ENCODE measurements at regions of chr3 and their contacts with region 1.

Region 1: GRCh38 chr3:123652346-123652984 is 67.6 kb upstream of the HACD2 start:
- DNase-seq: peak; percentile 89
- H3K4me3 ChIP-seq: no peak overlapping the region
- H3K27ac ChIP-seq: peak overlapping the region; percentile 66 to 81
- H3K4me1 ChIP-seq: peaks cover 16 to 18% of the 10 kb centered on the region in 2 experiments; a peak in 3 of 4 replicates
- H3K27me3 ChIP-seq: no peaks in the 10 kb centered on the region
- CTCF ChIP-seq: peak; percentile 95
- EP300 ChIP-seq: no peak
- RAD21 ChIP-seq: peak; percentile 98

Region 2: DNA sequence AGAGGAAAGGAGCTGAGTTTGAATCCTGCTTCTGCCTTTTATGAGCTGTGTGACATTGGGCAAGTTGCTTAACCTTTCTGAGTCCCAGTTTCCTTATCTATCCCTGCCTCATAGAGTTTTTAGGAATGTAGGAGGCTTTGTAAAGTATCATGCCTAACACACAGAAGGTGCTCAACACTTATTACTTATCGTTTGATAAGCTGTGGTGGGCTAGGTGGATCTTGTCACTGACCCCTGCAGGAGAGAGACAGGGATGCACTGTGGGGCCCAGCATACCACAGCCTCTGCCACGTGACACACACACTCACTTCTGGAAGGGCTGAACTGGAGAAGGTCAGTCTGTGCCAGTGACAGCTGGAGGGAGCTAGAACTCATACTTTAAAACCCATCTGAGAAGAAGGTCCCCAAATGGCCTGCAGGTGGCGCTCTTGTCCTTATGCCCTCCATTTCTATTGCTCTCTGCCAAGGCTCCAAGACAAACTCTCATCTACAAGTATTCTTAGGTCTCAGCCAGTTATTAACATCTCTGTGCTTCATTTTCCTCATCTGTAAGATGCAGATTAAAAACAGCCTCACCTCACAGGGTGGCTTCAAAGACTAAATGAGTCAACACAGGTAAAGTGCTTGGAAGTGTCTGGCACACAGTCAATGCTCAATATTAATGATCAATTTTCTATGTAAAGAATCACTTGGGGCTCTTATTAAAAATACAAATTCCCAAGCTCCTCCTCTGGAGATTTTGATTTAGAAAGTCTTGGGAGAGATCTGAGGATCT is 10.1 kb before region 1 on chr3:
- CTCF ChIA-PET with region 1: interaction called, 53 read pairs
- POLR2A ChIA-PET with region 1: no interaction called
- DNase-seq: peak; percentile 65
- H3K4me3 ChIP-seq: no peak overlapping the region; a peak in 1 of 4 replicates
- H3K27ac ChIP-seq: peak overlapping the region in 1 of 2 experiments; percentile 19; a peak in 2 of 4 replicates
- H3K4me1 ChIP-seq: peaks cover 0 to 7% of the 10 kb centered on the region in 2 experiments; a peak in 1 of 4 replicates
- H3K27me3 ChIP-seq: no peaks in the 10 kb centered on the region
- CTCF ChIP-seq: peak; percentile 97
- EP300 ChIP-seq: no peak
- RAD21 ChIP-seq: peak; percentile 65

Region 3: DNA sequence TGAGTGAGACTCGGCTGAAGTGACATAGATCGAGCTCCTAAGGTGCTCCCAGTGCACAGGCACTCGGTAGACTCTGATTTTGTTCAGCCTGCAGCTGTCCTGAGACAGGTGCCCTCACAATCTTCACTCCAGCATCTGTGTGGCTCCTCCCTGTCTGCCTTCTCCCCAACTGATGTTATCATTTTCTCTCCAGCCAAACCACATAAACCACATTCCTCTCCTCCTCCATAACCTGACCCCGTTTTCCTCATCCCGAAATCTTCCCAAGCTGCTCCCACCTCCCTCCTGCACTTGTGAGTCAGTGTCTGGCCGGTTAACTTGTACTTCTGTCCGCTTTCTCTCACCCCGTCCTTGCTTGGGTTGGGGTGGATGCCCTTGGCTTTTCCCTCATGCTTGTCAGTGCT is 25.6 kb after region 1 on chr3:
- CTCF ChIA-PET with region 1: interaction called, 44 read pairs
- POLR2A ChIA-PET with region 1: no interaction called
- DNase-seq: no peak
- H3K4me3 ChIP-seq: no peak overlapping the region
- H3K27ac ChIP-seq: peak overlapping the region in 1 of 2 experiments; percentile 58; a peak in 3 of 4 replicates
- H3K4me1 ChIP-seq: peaks cover 13 to 20% of the 10 kb centered on the region in 2 experiments; a peak in 2 of 4 replicates
- H3K27me3 ChIP-seq: no peaks in the 10 kb centered on the region
- CTCF ChIP-seq: no peak
- EP300 ChIP-seq: peak; percentile 9 to 93; a peak in 3 of 4 replicates
- RAD21 ChIP-seq: no peak

Region 4: DNA sequence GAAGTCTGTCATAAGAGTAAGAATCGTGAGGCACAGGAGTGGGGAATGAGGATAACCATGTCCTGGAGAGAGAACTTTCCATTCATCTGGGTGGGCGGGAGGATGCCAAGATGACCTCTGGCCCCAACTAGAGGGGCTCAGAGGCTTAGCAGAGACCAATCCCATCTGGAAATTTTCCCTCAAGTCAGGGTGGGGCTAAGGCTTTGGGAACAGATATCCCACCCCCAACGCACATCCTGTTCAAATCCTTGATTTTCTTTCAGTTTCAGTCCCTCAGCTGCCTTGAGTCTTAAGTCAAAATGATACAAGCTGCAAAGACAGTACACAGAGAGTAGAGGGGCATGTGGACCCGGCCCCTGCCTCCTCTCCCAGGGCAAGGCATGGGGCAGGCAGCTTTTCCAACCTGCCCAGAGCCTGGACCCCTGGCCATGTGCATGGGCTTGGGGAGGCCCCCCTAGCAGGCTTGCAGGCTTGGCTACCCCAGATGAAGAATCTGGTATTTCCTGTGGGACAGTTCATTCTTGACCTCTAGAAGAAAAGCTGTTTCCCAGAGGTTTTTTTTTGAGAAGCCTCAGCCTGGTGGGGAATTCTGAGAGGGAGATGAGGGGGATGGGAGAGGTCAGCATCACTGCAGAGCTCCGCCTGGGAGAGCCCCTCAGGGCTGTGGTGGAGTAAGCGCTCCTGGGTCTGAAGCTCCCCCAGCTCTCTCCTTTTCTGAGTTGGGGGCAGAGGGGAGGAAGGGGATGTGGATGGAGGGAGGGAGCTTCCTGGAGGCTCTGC is 42.1 kb after region 1 on chr3:
- CTCF ChIA-PET with region 1: interaction called, 48 read pairs
- POLR2A ChIA-PET with region 1: no interaction called
- DNase-seq: no peak
- H3K4me3 ChIP-seq: no peak overlapping the region
- H3K27ac ChIP-seq: peak overlapping the region; percentile 39 to 41; a peak in 3 of 4 replicates
- H3K4me1 ChIP-seq: peaks cover 16 to 30% of the 10 kb centered on the region in 2 experiments
- H3K27me3 ChIP-seq: no peaks in the 10 kb centered on the region
- CTCF ChIP-seq: no peak
- EP300 ChIP-seq: no peak
- RAD21 ChIP-seq: no peak

Region 5: GRCh38 chr3:123706871-123707270 is 54.4 kb after region 1 on chr3:
- CTCF ChIA-PET with region 1: interaction called, 129 read pairs
- POLR2A ChIA-PET with region 1: no interaction called
- DNase-seq: no peak
- H3K4me3 ChIP-seq: no peak overlapping the region
- H3K27ac ChIP-seq: no peak overlapping the region
- H3K4me1 ChIP-seq: peaks cover 8 to 13% of the 10 kb centered on the region in 2 experiments; a peak in 2 of 4 replicates
- H3K27me3 ChIP-seq: no peaks in the 10 kb centered on the region
- CTCF ChIP-seq: no peak
- EP300 ChIP-seq: no peak
- RAD21 ChIP-seq: no peak

Region 6: GRCh38 chr3:124258057-124258501 is 605.6 kb after region 1 on chr3:
- CTCF ChIA-PET with region 1: no interaction called
- POLR2A ChIA-PET with region 1: no interaction called
- DNase-seq: peak; percentile 65
- H3K4me3 ChIP-seq: no peak overlapping the region
- H3K27ac ChIP-seq: peak overlapping the region; percentile 36 to 99; a peak in 3 of 4 replicates
- H3K4me1 ChIP-seq: peaks cover 34 to 59% of the 10 kb centered on the region in 2 experiments
- H3K27me3 ChIP-seq: no peaks in the 10 kb centered on the region
- CTCF ChIP-seq: no peak
- EP300 ChIP-seq: peak in 1 of 2 experiments; percentile 58; a peak in 1 of 4 replicates
- RAD21 ChIP-seq: no peak